Activated naive CD4-positive, alpha-beta T cell treated with anti-CD3 and anti-CD28 coated beads for 36 hours (primary cell): ENCODE measurements at regions of chr13 and their contacts with region 1.

Region 1: GRCh38 chr13:113296842-113297369 is at the start of gene LAMP1:
- DNase-seq: peak; percentile 97
- H3K4me3 Mint-ChIP-seq: peak within 1 kb of the TSS; percentile 91
- H3K27ac Mint-ChIP-seq: peak within 1 kb of the TSS; percentile 96
- H3K4me1 Mint-ChIP-seq: peaks cover 32% of the 10 kb centered on the region
- H3K27me3 Mint-ChIP-seq: peaks cover 10% of the 10 kb centered on the region
- total RNA-seq, gene LAMP1: 33.5 to 33.7 TPM

Region 2: DNA sequence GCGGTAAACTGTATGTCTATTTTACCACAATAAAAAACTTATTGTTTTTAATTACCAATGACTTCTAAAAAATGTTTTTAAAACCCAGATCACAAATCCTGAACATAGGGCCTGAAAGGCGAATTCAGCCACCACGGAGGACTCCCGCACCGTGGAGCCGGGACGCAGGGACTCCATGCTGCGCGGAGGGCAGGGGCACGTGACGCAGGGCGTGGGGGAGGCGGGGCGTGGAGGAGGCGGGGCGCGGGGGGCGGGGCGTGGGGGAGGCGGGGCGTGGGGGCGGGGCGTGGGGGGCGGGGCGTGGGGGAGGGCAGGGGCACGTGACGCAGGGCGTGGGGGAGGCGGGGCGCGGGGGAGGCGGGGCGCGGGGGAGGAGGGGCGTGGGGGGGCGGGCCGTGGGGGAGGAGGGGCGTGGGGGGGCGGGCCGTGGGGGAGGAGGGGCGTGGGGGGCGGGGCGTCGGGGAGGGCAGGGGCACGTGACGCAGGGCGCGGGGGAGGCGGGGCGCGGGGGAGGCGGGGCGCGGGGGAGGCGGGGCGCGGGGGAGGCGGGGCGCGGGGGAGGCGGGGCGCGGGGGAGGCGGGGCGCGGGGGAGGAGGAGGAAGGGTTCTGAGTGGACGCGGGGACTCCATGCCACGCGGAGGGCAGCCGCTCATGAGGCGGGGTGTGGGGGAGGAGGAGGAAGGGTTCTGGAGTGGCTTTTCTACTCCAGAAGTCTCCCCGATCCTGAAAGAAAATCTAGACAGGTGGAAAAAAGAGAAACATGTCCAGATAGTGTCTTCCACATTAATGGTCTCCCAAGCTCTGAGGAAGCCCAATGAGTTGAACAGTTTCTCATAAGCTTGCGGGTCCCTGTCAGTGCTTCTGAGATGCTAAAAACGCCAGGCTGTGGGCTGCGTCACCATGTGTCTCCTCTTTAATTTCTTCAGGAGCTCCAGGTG is 142.8 kb before region 1 on chr13:
- CTCF ChIA-PET with region 1: no interaction called
- intact Hi-C with region 1: loop called (anchors 5 kb)
- DNase-seq: peak; percentile 68
- H3K4me3 Mint-ChIP-seq: peak overlapping the region; percentile 71
- H3K27ac Mint-ChIP-seq: peak overlapping the region; percentile 10
- H3K4me1 Mint-ChIP-seq: peaks cover 17% of the 10 kb centered on the region
- H3K27me3 Mint-ChIP-seq: peaks cover 4% of the 10 kb centered on the region

Region 3: DNA sequence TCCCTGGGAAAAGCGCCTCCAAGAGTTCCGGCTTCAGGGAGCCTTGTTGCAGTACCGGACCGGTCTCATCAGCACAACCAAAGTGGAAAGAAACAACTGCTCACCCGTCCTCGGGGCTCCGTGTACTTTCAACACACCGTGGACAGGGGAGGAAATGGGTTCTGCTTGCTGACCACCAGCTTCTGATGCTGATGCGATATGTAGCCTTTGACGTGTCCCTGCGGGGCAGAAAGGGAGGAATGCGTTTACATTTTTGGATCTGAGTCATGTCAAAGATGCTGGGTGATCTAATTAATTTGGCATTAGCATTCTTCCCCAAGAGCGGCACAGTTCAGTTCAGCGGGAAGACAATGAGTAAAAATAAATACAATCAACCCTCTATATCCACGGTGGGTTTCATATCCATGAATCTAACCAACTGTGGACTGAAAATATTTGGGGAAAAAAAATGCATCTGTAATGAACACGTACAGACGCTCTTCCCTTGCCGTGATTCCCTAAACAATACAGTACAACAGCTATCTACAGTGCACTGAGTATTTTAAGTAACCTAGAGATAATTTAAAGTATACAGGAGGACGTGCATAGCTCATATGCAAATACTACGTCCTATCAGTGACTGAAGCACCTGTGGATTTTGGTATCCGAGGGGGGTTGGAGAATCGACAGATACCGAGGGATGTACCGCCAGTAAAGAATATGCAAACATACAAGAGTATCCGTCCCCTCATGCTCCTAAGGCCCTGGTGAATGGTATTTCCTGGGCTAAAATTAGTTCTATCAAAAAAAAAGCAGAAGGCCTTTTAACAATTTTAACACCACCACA is 118.6 kb before region 1 on chr13:
- CTCF ChIA-PET with region 1: no interaction called
- intact Hi-C with region 1: no loop called
- DNase-seq: no peak
- H3K4me3 Mint-ChIP-seq: no peak overlapping the region
- H3K27ac Mint-ChIP-seq: no peak overlapping the region
- H3K4me1 Mint-ChIP-seq: peaks cover 17% of the 10 kb centered on the region
- H3K27me3 Mint-ChIP-seq: no peaks in the 10 kb centered on the region

Region 4: GRCh38 chr13:113393563-113394338 is 96.8 kb after region 1 on chr13:
- CTCF ChIA-PET with region 1: no interaction called
- intact Hi-C with region 1: loop called (anchors 2 kb)
- DNase-seq: peak; percentile 86
- H3K4me3 Mint-ChIP-seq: peak overlapping the region; percentile 85
- H3K27ac Mint-ChIP-seq: peak overlapping the region; percentile 46
- H3K4me1 Mint-ChIP-seq: peaks cover 4% of the 10 kb centered on the region
- H3K27me3 Mint-ChIP-seq: no peaks in the 10 kb centered on the region

Region 5: GRCh38 chr13:113490496-113491417 is 193.9 kb after region 1 on chr13 and contains the start of gene DCUN1D2:
- CTCF ChIA-PET with region 1: no interaction called
- intact Hi-C with region 1: loop called (anchors 1 kb)
- DNase-seq: peak; percentile 70
- H3K4me3 Mint-ChIP-seq: peak within 1 kb of the TSS; percentile 96
- H3K27ac Mint-ChIP-seq: peak within 1 kb of the TSS; percentile 85
- H3K4me1 Mint-ChIP-seq: peaks cover 64% of the 10 kb centered on the region
- H3K27me3 Mint-ChIP-seq: no peaks in the 10 kb centered on the region
- total RNA-seq, gene DCUN1D2: 14.3 to 14.7 TPM